Posterior vena cava (tissue), 2 donors: ENCODE measurements at regions of chr5 and their contacts with region 1.

Region 1: GRCh38 chr5:91061946-91062562 is 321.1 kb downstream of the ARRDC3 start:
- DNase-seq: no peak

Region 2: DNA sequence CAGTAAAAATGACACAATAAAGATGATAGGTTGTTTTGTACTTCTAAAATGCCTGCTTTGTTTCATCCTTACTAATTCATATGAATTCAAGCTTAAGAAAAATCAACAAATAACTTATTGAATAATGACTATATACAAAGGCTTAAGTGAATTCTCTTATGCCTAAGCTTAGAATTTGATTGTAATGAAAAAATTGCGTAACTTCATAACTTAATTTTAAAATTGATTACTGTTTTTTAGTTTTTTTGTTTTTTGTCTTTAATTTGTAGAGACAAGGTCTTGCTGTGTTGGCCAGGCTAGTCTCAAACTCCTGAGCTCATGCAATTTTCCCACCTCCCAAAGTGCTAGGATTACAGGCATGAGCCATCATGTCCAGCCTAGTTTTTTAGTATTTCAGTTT is 70.9 kb before region 1 on chr5:
- intact Hi-C with region 1: loop called in 1 of 2 experiments (anchors 2 kb)
- DNase-seq: no peak

Region 3: DNA sequence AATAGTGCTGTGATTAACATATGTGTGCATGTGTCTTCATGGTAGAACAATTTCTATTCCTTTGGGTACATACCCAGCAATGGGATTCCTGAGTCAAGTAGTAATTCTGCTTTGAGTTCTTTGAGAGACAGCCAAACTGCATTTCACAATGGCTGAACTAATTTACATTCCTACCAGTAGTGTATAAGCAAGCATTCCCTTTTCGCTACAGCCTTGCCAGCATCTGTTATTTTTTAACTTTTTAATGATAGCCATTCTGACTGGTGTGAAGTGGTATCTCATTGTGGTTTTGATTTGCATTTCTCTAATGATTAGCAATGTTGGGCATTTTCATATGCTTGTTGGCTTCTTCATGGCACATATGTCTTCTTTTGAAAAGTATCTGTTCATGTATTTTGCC is 12.6 kb after region 1 on chr5:
- intact Hi-C with region 1: no loop called
- DNase-seq: no peak